Posterior cingulate gyrus (tissue), 11 donors: ENCODE measurements at regions of chr9 and their contacts with region 1.

Region 1: DNA sequence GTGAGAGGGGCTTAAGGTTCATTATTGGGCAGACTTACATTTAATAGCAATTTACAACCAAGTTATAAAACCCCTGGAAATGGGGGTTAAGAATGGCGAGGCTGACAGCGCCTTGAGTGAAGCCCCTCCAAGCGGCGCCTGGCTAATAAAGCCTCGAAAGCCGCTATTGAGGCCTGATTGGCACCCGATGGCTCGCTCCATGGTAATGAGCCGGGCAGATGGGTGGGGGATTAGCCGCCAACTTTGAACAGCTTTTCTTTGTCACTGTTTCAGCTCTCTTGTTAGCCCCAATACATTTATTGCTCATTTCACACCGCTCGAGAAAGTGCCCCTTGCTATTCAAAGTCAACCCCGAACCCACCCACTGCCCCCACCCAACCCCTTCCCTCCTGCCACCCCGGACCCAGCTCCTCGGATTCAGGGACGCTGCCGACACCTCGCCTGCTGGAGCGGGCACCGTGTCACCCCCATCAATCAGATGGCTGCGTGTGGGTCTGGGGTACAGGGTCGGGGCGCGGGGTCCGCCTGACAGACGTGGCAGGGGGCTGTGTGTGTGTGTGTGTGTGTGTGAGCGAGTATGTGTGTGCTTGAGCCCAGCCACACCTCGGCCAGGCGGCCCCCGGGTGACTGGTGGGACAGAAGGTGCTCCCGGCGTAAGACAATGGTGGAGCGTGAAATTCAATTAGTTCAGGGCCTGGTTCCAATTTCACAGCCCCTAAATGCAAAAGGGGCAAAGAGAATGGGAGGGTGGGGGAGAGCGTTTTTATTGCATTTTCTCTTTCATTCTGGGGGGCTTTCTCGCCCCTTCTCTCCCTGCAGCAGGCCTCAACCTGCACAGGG is 34.2 kb downstream of the ASS1 start:
- DNase-seq: no peak

Region 2: GRCh38 chr9:130578865-130579737 is 100.1 kb after region 1 on chr9 and contains the start of gene FUBP3:
- intact Hi-C with region 1: loop called (anchors 10 kb)
- DNase-seq: peak; percentile 93 to 99 (median 97)